Cardiac septum (tissue), 1 donor: ENCODE measurements at regions of chr1 and their contacts with region 1.

Region 1: GRCh38 chr1:33784876-33785275 is 79.0 kb upstream of the HMGB4 start:
- DNase-seq: no peak

Region 2: DNA sequence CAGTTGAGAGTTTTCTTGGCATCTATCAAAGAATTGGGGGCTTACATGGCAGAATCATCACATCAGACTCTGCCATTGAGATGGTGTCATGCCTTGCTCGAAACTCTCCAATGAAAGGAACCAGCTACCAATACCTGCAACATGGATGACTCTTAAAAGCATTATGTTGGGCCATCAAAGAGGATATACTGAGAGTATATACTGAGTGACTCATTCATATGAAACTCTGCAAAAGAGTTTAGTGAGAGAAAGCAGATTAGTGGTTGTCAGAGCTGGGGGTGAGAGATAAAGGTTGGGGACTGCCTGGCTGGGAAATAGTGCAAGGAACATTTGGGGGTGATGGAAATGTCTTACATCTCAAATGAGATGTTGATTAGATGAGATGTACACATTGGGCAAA is 64.3 kb after region 1 on chr1:
- intact Hi-C with region 1: loop called (anchors 5 kb)
- DNase-seq: no peak